ENCODE measurements at regions of chr22 and their contacts with region 1.

Region 1: DNA sequence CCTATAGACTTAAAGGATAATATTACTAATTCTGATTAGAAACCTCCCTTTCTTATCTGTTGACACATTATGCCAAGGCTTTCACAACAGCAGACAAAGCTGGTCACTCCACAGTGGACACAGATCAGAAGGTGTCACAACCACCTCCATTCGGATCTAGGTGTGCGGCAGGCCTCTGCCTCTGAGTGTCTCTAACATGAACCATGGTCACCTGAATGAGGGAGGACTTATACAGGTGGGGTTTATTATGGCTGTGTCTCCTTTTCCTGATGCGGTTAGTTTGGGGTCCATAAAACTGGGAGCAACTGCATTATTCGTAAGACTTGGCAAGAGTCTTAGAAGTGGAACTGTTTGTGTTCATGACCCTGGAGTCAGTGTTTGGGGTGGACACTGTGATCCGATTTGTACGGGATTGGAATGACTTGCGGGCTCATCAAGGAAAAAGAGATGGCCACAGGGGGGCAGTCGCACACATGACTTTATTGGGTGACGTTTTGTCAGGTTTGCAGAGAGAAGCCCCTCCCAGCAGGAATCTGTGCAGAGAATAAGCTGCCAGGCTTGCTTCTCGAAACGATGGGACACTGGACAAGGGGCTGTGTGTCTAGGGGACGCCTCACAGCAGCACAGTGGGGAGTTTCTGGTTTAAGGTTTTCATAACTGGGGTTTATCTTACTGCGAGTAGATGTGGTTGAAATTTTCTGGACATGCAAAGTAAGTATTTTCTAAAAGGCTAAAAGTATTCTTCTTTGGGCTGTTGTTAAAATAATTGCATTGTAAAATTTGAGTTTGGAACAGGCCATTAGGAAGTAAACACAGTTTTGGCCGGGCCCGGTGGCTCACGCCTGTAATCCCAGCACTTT is 90.6 kb downstream of the GAB4 start:
- DNase-seq: peak; percentile 66 to 70
- H3K4me3 ChIP-seq: no peak overlapping the region
- H3K27ac ChIP-seq: no peak overlapping the region
- H3K4me1 ChIP-seq: no peaks in the 10 kb centered on the region
- H3K27me3 ChIP-seq: no peaks in the 10 kb centered on the region
- CTCF ChIP-seq: peak in 3 of 6 experiments; percentile 48 to 61 (median 50)
- POLR2A ChIP-seq: no peak

Region 2: DNA sequence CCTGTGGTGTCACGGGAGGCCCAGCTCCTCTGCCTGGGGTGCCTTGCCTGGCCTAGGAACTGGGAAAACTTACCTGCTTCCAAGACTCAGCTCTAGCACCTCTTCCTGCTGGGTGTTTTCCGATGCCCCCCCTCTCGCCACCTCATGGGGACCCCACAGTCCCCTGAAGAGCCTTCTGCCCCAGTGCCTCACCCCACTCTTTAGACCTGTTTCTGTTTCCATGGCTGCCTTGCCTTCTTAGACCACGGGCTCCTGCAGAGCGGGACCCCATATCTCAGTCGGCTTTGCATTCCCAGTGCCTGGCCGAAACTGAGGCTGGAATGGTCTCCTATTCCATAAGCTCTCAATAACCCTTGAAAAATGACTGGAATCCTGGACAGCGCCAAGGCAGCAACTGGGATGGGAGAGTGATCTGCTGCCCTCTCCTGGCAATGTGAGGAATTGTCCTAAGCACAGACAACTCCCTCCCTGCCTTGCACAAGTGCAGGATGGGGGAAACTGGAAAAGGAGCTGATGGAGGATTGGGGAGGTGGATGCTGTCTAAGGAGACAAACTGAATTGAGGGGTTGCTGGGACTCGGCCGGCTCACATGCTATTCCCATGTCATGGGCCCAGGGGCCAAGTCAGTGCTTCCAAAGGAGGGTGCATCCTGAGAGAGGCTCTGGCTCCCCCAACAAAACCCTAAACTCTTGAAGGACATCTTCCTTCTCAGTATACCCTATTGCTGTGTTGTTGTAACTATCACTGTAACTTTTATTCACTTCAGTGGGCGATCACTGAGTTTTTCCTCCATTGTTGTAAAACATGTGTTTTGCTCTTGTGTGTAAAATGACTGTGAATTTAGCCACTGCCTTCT is 140.8 kb after region 1 on chr22:
- intact Hi-C with region 1: loop called (anchors 5 kb)
- DNase-seq: peak; percentile 56 to 61
- H3K4me3 ChIP-seq: no peak overlapping the region
- H3K27ac ChIP-seq: no peak overlapping the region
- H3K4me1 ChIP-seq: no peaks in the 10 kb centered on the region
- H3K27me3 ChIP-seq: no peaks in the 10 kb centered on the region
- CTCF ChIP-seq: peak; percentile 61 to 95 (median 84)
- POLR2A ChIP-seq: no peak

Measured in thyroid gland (tissue), 4 donors.